ENCODE measurements at regions of chr5 and their contacts with region 1.

Region 1: DNA sequence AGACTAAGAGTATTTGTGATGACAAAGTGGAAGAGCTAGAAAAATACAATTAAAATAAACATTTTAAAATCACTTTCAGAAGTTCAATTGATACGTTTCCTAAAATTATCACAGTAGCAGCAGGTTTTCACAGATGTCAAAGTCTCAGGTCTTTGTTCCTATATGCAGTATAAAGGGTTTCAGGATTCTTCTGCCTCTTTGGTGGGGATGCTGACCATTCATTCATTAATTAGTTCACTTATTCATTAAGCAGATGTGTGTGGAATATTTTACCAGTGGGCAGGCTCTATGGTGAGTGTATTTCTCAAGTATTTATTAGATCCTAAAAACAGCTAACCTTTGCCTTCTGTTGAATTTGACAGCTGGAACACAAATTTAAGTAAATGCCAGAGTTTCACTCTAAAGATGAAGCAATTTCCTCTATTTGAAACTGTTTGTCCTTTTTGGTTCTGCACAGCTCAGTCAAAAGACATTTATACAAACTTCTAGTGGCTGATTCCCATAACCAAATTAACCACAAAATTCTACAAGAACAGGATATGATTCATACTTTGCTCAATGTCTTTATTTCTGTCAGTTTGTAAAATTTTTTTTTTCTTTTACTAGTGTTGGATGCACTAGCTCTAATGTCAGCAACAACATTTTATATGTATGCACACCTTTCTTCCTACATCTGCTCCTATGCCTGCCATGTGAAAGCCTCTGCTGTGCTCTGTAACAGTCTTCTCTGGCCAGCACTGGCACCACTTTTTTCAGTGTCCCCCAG is 75.9 kb upstream of the PRR16 start:
- DNase-seq: no peak
- ATAC-seq: peak; percentile 41 to 88 (median 68)
- H3K4me3 ChIP-seq: no peak overlapping the region
- H3K27ac ChIP-seq: peak overlapping the region in 7 of 10 donors; percentile 42 to 71 (median 56)
- H3K4me1 ChIP-seq: peaks cover 0 to 22% (median 3%) of the 10 kb centered on the region in 9 donors
- H3K27me3 ChIP-seq: no peaks in the 10 kb centered on the region
- CTCF ChIP-seq: no peak

Region 2: GRCh38 chr5:119470851-119471451 is 917.2 kb before region 1 on chr5:
- intact Hi-C with region 1: no loop called
- DNase-seq: no peak
- ATAC-seq: no peak
- H3K4me3 ChIP-seq: no peak overlapping the region
- H3K27ac ChIP-seq: no peak overlapping the region
- H3K4me1 ChIP-seq: peaks cover 0 to 14% (median 4%) of the 10 kb centered on the region in 9 donors
- H3K27me3 ChIP-seq: no peaks in the 10 kb centered on the region
- CTCF ChIP-seq: peak; percentile 17 to 66 (median 54)

Region 3: DNA sequence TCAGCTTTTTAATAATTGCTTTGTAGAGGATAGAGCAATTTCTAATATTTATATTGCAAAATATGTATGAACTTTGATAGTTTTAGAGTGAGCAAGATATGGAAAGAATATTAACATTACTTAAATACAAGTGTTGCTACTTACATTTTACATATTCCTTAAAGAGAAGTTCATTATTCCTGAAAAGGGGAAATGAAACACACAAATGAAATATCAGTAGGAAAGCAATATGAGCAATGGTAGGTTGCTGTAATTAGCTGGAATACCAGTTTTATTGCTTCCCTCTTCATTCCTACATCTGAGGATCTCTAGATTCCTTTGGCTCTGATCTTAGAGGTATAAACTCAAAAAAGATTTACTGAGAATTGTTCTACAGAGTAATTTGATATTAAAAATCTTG is 344.8 kb before region 1 on chr5:
- intact Hi-C with region 1: no loop called
- DNase-seq: no peak
- ATAC-seq: no peak
- H3K4me3 ChIP-seq: no peak overlapping the region
- H3K27ac ChIP-seq: no peak overlapping the region
- H3K4me1 ChIP-seq: no peaks in the 10 kb centered on the region
- H3K27me3 ChIP-seq: no peaks in the 10 kb centered on the region
- CTCF ChIP-seq: no peak

Region 4: GRCh38 chr5:120108586-120109248 is 279.5 kb before region 1 on chr5:
- intact Hi-C with region 1: no loop called
- DNase-seq: no peak
- ATAC-seq: no peak
- H3K4me3 ChIP-seq: no peak overlapping the region
- H3K27ac ChIP-seq: no peak overlapping the region
- H3K4me1 ChIP-seq: no peaks in the 10 kb centered on the region
- H3K27me3 ChIP-seq: no peaks in the 10 kb centered on the region
- CTCF ChIP-seq: no peak

Region 5: GRCh38 chr5:120270498-120270897 is 117.7 kb before region 1 on chr5:
- intact Hi-C with region 1: no loop called
- DNase-seq: no peak
- ATAC-seq: no peak
- H3K4me3 ChIP-seq: no peak overlapping the region
- H3K27ac ChIP-seq: no peak overlapping the region
- H3K4me1 ChIP-seq: no peaks in the 10 kb centered on the region
- H3K27me3 ChIP-seq: no peaks in the 10 kb centered on the region
- CTCF ChIP-seq: no peak

Region 6: GRCh38 chr5:120375248-120375647 is 13.0 kb before region 1 on chr5:
- intact Hi-C with region 1: loop called in 1 of 10 experiments (anchors 2 kb)
- DNase-seq: no peak
- ATAC-seq: no peak
- H3K4me3 ChIP-seq: no peak overlapping the region
- H3K27ac ChIP-seq: peak overlapping the region in 2 of 10 donors; percentile 5 to 41
- H3K4me1 ChIP-seq: peaks cover 0 to 4% (median 0%) of the 10 kb centered on the region in 9 donors
- H3K27me3 ChIP-seq: no peaks in the 10 kb centered on the region
- CTCF ChIP-seq: no peak

Region 7: GRCh38 chr5:120413706-120414105 is 25.5 kb after region 1 on chr5:
- intact Hi-C with region 1: loop called in 1 of 10 experiments (anchors 1 kb)
- DNase-seq: no peak
- ATAC-seq: no peak
- H3K4me3 ChIP-seq: no peak overlapping the region
- H3K27ac ChIP-seq: no peak overlapping the region
- H3K4me1 ChIP-seq: no peaks in the 10 kb centered on the region
- H3K27me3 ChIP-seq: no peaks in the 10 kb centered on the region
- CTCF ChIP-seq: no peak